B cell (primary cell): ENCODE measurements at regions of chr5 and their contacts with region 1.

Region 1: GRCh38 chr5:154189819-154190594 is 526 bp upstream of the GALNT10 start:
- DNase-seq: peak; percentile 94
- ATAC-seq: peak; percentile 85
- H3K4me3 ChIP-seq: peak overlapping the region; percentile 74 to 84 (median 82)
- H3K4me3 Mint-ChIP-seq: peak overlapping the region; percentile 92
- H3K27ac ChIP-seq: peak overlapping the region; percentile 75 to 78
- H3K27ac Mint-ChIP-seq: peak overlapping the region; percentile 90
- H3K4me1 ChIP-seq: peaks cover 23 to 31% of the 10 kb centered on the region in 2 donors
- H3K4me1 Mint-ChIP-seq: peaks cover 48% of the 10 kb centered on the region
- H3K27me3 ChIP-seq: no peaks in the 10 kb centered on the region
- H3K27me3 Mint-ChIP-seq: no peaks in the 10 kb centered on the region
- CTCF ChIP-seq: peak; percentile 71

Region 2: GRCh38 chr5:154038707-154039457 is 151.1 kb before region 1 on chr5 and contains the starts of genes FAM114A2 and MFAP3:
- CTCF ChIA-PET with region 1: interaction called, 3 read pairs
- POLR2A ChIA-PET with region 1: interaction called, 9 read pairs
- intact Hi-C with region 1: loop called (anchors 1 kb)
- DNase-seq: peak; percentile 90
- ATAC-seq: peak; percentile 98
- H3K4me3 ChIP-seq: peak within 1 kb of the TSS; percentile 77 to 94 (median 86)
- H3K4me3 Mint-ChIP-seq: peak within 1 kb of the TSS; percentile 99
- H3K27ac ChIP-seq: peak within 1 kb of the TSS; percentile 88 to 90
- H3K27ac Mint-ChIP-seq: peak within 1 kb of the TSS; percentile 99
- H3K4me1 ChIP-seq: peaks cover 13 to 16% of the 10 kb centered on the region in 2 donors
- H3K4me1 Mint-ChIP-seq: peaks cover 46% of the 10 kb centered on the region
- H3K27me3 ChIP-seq: no peaks in the 10 kb centered on the region
- H3K27me3 Mint-ChIP-seq: no peaks in the 10 kb centered on the region
- CTCF ChIP-seq: no peak
- total RNA-seq, gene FAM114A2: 34.2 and 36.2 TPM in 2 replicates
- total RNA-seq, gene MFAP3: 22.9 and 27.1 TPM in 2 replicates

Region 3: DNA sequence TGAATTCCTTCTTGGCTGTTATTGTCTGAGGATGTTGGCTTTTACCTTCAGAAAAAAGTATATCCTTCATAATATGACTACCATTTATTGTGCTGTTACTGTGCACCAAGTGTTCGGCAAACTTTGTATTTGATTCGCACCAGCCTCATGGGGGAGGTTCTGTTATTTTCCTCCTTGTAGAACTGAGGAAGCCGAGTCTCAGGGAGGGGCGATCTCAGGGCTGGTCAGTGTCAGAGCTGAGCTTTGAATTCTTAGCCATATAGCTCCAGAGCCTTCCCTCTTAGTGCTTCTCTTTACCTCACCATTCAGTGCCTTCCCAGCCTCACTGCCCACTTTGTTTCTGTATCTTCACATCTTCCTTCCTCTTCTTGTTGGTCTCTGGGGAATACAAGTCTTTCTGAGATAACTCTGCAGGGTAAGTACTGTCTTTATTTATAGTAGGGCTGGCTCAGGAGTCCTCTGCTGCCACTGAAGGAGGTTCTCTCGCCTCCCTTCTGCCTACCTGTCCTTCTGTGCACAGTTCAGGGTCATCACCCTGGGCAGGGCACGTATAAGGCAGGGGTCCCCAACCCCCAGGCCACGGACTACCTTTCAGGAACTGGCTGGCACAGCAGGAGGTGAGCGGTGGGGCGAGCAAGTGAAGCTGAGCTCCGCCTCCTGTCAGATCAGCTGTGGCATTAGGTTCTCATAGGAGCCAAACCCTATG is 48.9 kb after region 1 on chr5:
- CTCF ChIA-PET with region 1: interaction called, 17 read pairs
- POLR2A ChIA-PET with region 1: interaction called, 3 read pairs
- intact Hi-C with region 1: loop called (anchors 1 kb)
- DNase-seq: peak; percentile 84
- ATAC-seq: peak; percentile 97
- H3K4me3 ChIP-seq: peak overlapping the region in 4 of 5 experiments; percentile 32 to 65 (median 46)
- H3K4me3 Mint-ChIP-seq: peak overlapping the region; percentile 65
- H3K27ac ChIP-seq: peak overlapping the region; percentile 42 to 45
- H3K27ac Mint-ChIP-seq: peak overlapping the region; percentile 77
- H3K4me1 ChIP-seq: peaks cover 60 to 62% of the 10 kb centered on the region in 2 donors
- H3K4me1 Mint-ChIP-seq: peaks cover 79% of the 10 kb centered on the region
- H3K27me3 ChIP-seq: no peaks in the 10 kb centered on the region
- H3K27me3 Mint-ChIP-seq: no peaks in the 10 kb centered on the region
- CTCF ChIP-seq: no peak

Region 4: DNA sequence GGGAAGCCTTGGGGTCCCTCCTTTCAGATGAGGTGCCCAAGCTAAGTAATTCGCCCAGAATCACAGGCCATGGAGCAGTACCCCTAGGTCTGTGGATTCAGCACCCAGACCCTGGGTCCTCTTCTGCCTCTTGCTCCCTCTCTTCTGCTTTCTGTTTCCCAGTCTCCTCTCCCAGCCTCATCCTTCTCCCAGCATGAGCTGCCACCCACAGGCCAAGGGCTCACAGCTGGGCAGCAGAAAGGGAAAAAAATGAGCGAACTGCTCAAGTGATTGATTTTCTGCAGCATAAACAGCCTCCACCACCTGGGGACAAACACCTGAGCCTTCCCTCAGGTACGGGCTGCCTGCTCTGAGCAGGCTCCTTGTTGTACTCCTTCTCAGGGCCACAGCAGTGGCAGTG is 141.9 kb after region 1 on chr5:
- CTCF ChIA-PET with region 1: no interaction called
- POLR2A ChIA-PET with region 1: no interaction called
- intact Hi-C with region 1: no loop called
- DNase-seq: no peak
- ATAC-seq: no peak
- H3K4me3 ChIP-seq: no peak overlapping the region
- H3K4me3 Mint-ChIP-seq: no peak overlapping the region
- H3K27ac ChIP-seq: no peak overlapping the region
- H3K27ac Mint-ChIP-seq: no peak overlapping the region
- H3K4me1 ChIP-seq: no peaks in the 10 kb centered on the region
- H3K4me1 Mint-ChIP-seq: peaks cover 1% of the 10 kb centered on the region
- H3K27me3 ChIP-seq: no peaks in the 10 kb centered on the region
- H3K27me3 Mint-ChIP-seq: no peaks in the 10 kb centered on the region
- CTCF ChIP-seq: no peak

Region 5: GRCh38 chr5:154405078-154405792 is 215.2 kb after region 1 on chr5:
- CTCF ChIA-PET with region 1: interaction called, 17 read pairs
- POLR2A ChIA-PET with region 1: no interaction called
- intact Hi-C with region 1: loop called (anchors 2 kb)
- DNase-seq: peak; percentile 82
- ATAC-seq: peak; percentile 98
- H3K4me3 ChIP-seq: peak overlapping the region in 4 of 5 experiments; percentile 15 to 48 (median 40)
- H3K4me3 Mint-ChIP-seq: peak overlapping the region; percentile 64
- H3K27ac ChIP-seq: no peak overlapping the region
- H3K27ac Mint-ChIP-seq: no peak overlapping the region
- H3K4me1 ChIP-seq: peaks cover 3 to 11% of the 10 kb centered on the region in 2 donors
- H3K4me1 Mint-ChIP-seq: peaks cover 13% of the 10 kb centered on the region
- H3K27me3 ChIP-seq: no peaks in the 10 kb centered on the region
- H3K27me3 Mint-ChIP-seq: no peaks in the 10 kb centered on the region
- CTCF ChIP-seq: peak; percentile 87

Region 6: GRCh38 chr5:154940772-154941620 is 751.0 kb after region 1 on chr5 and contains the start of gene MRPL22:
- CTCF ChIA-PET with region 1: interaction called, 4 read pairs
- POLR2A ChIA-PET with region 1: no interaction called
- intact Hi-C with region 1: loop called (anchors 2 kb)
- DNase-seq: peak; percentile 97
- ATAC-seq: peak; percentile 67
- H3K4me3 ChIP-seq: peak within 1 kb of the TSS; percentile 57 to 94 (median 77)
- H3K4me3 Mint-ChIP-seq: peak within 1 kb of the TSS; percentile 99
- H3K27ac ChIP-seq: peak within 1 kb of the TSS; percentile 56 to 88
- H3K27ac Mint-ChIP-seq: peak within 1 kb of the TSS; percentile 93
- H3K4me1 ChIP-seq: peaks cover 27 to 32% of the 10 kb centered on the region in 2 donors
- H3K4me1 Mint-ChIP-seq: peaks cover 51% of the 10 kb centered on the region
- H3K27me3 ChIP-seq: no peaks in the 10 kb centered on the region
- H3K27me3 Mint-ChIP-seq: no peaks in the 10 kb centered on the region
- CTCF ChIP-seq: no peak
- total RNA-seq, gene MRPL22: 21.4 and 32.5 TPM in 2 replicates